Caco-2 (cell line): ENCODE measurements at regions of chr3 and their contacts with region 1.

Region 1: GRCh38 chr3:115092220-115092791 is 54.8 kb downstream of the ZBTB20 start:
- DNase-seq: peak; percentile 53 to 56
- H3K4me3 ChIP-seq: no peak overlapping the region
- H3K4me3 Mint-ChIP-seq: no peak overlapping the region
- H3K27ac Mint-ChIP-seq: no peak overlapping the region
- H3K4me1 ChIP-seq: no peaks in the 10 kb centered on the region
- H3K4me1 Mint-ChIP-seq: no peaks in the 10 kb centered on the region
- H3K27me3 ChIP-seq: no peaks in the 10 kb centered on the region
- H3K27me3 Mint-ChIP-seq: peaks cover 5% of the 10 kb centered on the region
- CTCF ChIP-seq: peak; percentile 49 to 68

Region 2: GRCh38 chr3:115040673-115041286 is 51.5 kb before region 1 on chr3:
- CTCF ChIA-PET with region 1: no interaction called
- POLR2A ChIA-PET with region 1: no interaction called
- intact Hi-C with region 1: loop called (anchors 1 kb)
- DNase-seq: peak; percentile 23 to 25
- H3K4me3 ChIP-seq: no peak overlapping the region
- H3K4me3 Mint-ChIP-seq: no peak overlapping the region
- H3K27ac Mint-ChIP-seq: no peak overlapping the region
- H3K4me1 ChIP-seq: no peaks in the 10 kb centered on the region
- H3K4me1 Mint-ChIP-seq: no peaks in the 10 kb centered on the region
- H3K27me3 ChIP-seq: no peaks in the 10 kb centered on the region
- H3K27me3 Mint-ChIP-seq: no peaks in the 10 kb centered on the region
- CTCF ChIP-seq: peak; percentile 54 to 61

Region 3: DNA sequence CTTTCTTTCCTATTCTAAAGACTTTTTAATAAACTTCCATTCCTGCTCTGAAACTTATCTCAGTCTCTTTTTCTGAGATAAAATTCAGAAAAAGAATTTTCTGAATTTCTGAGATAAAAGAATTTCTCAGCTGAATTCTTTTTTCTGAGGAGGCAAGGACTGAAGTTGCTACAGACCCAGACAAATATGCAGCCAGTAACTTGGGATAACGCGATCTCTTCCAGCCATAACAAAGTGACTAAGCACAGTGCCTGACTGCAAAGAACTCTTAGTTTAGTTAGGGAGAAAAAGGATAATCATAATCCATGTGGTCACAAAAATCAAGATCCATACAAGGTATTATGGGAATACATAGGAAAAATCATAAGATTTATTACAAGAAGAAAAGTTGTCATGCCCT is 309.0 kb after region 1 on chr3:
- CTCF ChIA-PET with region 1: no interaction called
- POLR2A ChIA-PET with region 1: no interaction called
- intact Hi-C with region 1: no loop called
- DNase-seq: no peak
- H3K4me3 ChIP-seq: no peak overlapping the region
- H3K4me3 Mint-ChIP-seq: no peak overlapping the region
- H3K27ac Mint-ChIP-seq: no peak overlapping the region
- H3K4me1 ChIP-seq: no peaks in the 10 kb centered on the region
- H3K4me1 Mint-ChIP-seq: no peaks in the 10 kb centered on the region
- H3K27me3 ChIP-seq: no peaks in the 10 kb centered on the region; the same call in 1 of the 2 replicates
- H3K27me3 Mint-ChIP-seq: peaks cover 5% of the 10 kb centered on the region
- CTCF ChIP-seq: no peak

Region 4: DNA sequence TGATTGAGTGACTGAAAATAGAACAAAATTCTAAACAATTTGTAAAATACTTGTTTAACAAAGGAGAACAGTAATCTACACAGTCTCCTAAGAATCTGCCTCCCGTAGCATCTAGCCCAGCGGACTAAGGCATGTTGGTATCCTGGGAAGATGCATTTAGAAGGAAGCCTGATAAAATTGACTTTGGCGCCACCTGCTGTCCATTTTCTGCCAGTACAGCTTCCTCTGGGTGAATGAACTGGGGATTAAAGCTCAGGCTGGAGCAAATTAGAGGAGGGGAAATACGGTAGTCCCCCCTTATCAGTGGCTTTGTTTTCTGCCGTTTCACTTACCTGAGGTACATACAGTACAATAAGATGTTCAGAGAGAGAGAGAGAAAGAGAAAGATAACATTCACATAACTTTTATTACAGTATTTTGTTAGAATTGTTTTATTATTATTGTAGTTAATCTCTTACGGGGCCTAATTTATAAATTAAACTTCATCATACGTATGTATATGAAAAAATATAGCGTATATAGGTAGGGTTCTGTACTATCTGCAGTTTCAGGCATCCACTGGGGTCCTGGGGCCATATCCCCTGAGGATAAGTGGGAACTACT is 722.6 kb after region 1 on chr3:
- CTCF ChIA-PET with region 1: no interaction called
- POLR2A ChIA-PET with region 1: no interaction called
- intact Hi-C with region 1: loop called (anchors 1 kb)
- DNase-seq: peak; percentile 63 to 74
- H3K4me3 ChIP-seq: no peak overlapping the region
- H3K4me3 Mint-ChIP-seq: no peak overlapping the region
- H3K27ac Mint-ChIP-seq: no peak overlapping the region
- H3K4me1 ChIP-seq: no peaks in the 10 kb centered on the region
- H3K4me1 Mint-ChIP-seq: no peaks in the 10 kb centered on the region
- H3K27me3 ChIP-seq: no peaks in the 10 kb centered on the region
- H3K27me3 Mint-ChIP-seq: peaks cover 7% of the 10 kb centered on the region
- CTCF ChIP-seq: peak; percentile 82 to 83